ENCODE measurements at regions of chr4 and their contacts with region 1.

Region 1: DNA sequence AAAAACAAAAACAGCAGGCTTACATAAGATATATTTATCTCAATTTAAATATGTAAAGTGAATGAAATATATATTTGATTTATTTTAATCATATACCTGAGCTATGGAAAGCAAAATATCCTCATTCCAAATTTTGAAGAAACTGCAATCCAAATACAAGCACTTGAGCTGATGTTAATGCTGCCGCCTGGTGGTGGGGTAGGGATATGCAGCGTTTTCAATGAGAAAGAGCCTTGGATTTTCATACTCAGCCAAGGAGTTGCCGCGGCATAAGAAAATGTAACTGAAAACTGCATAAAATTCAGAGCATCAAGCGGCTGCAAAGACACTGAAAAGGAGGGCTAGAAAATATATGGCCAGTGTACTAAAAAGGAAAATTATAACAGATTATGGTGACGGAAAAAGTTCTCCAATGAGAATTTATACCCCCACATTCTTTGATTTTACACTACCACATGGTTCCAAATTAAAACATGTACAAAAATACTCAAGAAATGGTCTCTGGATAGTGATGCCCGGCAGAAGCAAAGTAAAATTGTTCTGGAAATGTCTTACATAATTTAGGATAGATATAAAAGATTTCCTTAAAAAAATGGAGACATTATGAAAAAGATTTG is 660.3 kb upstream of the PITX2 start:
- DNase-seq: peak; percentile 21
- ATAC-seq: no peak

Region 2: DNA sequence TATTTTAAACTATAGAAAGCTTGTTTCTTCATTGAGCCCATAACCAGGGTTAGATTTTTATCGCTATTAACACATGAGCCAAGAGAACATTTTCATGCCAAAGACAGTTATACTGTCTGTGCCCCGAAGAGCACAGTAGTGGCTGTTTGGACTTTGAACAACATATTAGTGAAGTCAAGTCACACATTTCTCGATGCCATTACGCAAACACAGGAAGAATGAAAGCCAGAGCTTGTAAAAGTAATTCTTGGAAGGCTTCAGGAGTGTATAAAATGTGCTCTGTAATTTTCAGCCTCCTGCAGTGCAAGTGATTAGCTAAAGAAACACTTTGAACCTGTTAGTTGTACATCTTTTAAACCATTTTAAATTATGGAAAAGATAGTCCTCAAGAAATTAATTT is 69.6 kb before region 1 on chr4:
- intact Hi-C with region 1: no loop called
- DNase-seq: no peak
- ATAC-seq: no peak

Region 3: GRCh38 chr4:111475001-111475400 is 191.8 kb after region 1 on chr4:
- intact Hi-C with region 1: loop called in 1 of 2 experiments (anchors 5 kb)
- DNase-seq: no peak
- ATAC-seq: peak in 1 of 2 donors; percentile 54

Measured in left cardiac atrium (tissue), 4 donors.